Activated B cell treated with CpG ODN at 0.5 μM for 24 hours (primary cell): ENCODE measurements at regions of chr22 and their contacts with region 1.

Region 1: DNA sequence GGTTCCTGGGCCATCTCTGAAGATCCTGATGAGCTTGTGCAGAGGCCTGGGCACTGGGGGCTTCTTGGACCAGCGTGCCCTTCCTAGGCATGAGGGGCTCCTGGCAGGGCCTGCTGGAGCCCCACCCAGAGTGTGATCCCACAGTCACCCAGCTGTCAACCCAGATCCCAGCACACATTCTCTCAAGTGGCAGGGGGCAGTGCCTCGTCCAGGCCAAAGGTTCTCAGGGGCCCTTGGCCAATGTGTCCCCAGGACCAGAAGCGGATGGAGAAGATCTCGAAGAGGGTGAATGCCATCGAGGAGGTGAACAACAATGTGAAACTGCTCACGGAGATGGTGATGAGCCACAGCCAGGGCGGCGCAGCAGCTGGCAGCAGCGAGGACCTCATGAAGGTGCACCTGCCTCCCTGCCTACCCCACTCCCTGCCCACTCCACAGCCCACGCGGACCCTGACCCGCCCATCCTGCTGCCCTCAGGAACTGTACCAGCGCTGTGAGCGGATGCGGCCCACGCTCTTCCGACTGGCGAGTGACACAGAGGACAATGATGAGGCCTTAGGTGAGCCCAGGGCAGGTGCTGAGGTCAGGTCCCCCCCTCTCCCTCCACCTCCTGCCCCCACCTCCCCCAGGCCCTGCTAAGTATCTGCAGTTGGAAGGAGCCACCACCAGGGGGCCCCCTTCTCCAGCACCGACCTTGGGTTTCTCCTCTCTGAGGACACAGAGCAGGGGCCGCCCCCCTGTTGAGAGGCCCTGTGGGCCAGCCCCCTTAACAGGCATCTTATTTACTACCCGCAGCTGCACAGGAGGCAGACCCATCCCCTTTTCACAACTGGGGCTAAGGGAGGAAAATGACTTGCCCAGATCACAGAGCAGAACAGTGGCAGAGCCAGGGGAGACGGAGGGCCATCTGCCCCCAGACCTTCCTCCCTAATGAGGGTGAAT is 14.7 kb downstream of the GGA1 start:
- DNase-seq: peak; percentile 73
- ATAC-seq: peak; percentile 80
- H3K4me3 Mint-ChIP-seq: peak overlapping the region; percentile 24
- H3K27ac Mint-ChIP-seq: peak overlapping the region; percentile 84
- H3K4me1 Mint-ChIP-seq: peaks cover 64% of the 10 kb centered on the region
- H3K27me3 Mint-ChIP-seq: no peaks in the 10 kb centered on the region
- CTCF ChIP-seq: peak; percentile 38

Region 2: GRCh38 chr22:37633625-37634416 is 10.5 kb after region 1 on chr22:
- CTCF ChIA-PET with region 1: interaction called, 10 read pairs
- POLR2A ChIA-PET with region 1: interaction called, 51 read pairs
- intact Hi-C with region 1: loop called (anchors 1 kb)
- DNase-seq: peak; percentile 69
- ATAC-seq: peak; percentile 78
- H3K4me3 Mint-ChIP-seq: peak overlapping the region; percentile 74
- H3K27ac Mint-ChIP-seq: peak overlapping the region; percentile 93
- H3K4me1 Mint-ChIP-seq: peaks cover 67% of the 10 kb centered on the region
- H3K27me3 Mint-ChIP-seq: no peaks in the 10 kb centered on the region
- CTCF ChIP-seq: no peak

Region 3: GRCh38 chr22:37643225-37643847 is 20.0 kb after region 1 on chr22:
- CTCF ChIA-PET with region 1: interaction called, 90 read pairs
- POLR2A ChIA-PET with region 1: interaction called, 51 read pairs
- intact Hi-C with region 1: loop called (anchors 1 kb)
- DNase-seq: peak; percentile 85
- ATAC-seq: peak; percentile 80
- H3K4me3 Mint-ChIP-seq: peak overlapping the region; percentile 28
- H3K27ac Mint-ChIP-seq: peak overlapping the region; percentile 59
- H3K4me1 Mint-ChIP-seq: peaks cover 34% of the 10 kb centered on the region
- H3K27me3 Mint-ChIP-seq: no peaks in the 10 kb centered on the region
- CTCF ChIP-seq: peak; percentile 64